Activated CD4-positive, alpha-beta memory T cell treated with anti-CD3 and anti-CD28 coated beads for 36 hours (primary cell): ENCODE measurements at regions of chr11 and their contacts with region 1.

Region 1: DNA sequence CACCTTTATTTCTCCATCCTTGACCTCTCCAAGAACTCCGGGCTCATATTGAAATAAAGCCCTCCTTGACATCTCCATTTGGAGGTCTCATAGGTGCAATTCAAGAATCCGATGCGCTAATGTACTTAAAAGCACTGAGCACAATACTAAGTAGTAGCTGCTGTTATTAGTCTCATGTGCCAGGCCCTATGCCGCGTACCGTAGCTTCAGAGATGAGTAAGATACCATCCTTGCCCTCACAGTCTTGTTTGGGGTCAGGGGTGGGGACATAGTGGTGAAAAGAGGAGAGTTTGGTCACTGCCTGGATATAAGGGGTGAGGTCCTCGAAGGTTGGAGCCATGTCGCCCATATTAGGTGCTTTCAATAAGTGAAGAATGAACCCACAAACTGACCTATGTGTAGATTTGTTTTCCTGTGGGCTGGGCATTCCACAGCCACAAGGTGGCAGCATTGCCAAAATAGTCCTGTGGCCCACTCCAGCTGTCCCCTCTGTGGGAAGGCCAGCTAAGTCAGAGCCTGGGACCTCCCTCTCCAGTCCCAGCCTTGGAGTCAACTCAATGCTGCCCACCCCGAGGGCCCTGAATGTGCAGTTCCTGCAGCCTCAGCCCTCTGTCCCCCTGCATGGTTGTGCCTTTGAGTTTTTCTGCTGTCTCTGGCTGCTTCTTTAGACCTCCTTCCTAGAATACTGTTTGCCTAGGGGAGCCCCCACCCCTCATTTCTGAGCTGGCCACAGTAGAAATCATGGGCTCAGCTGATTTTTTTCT is 6.5 kb downstream of the DCPS start:
- DNase-seq: peak; percentile 70
- H3K4me3 Mint-ChIP-seq: no peak overlapping the region
- H3K27ac Mint-ChIP-seq: no peak overlapping the region
- H3K4me1 Mint-ChIP-seq: peaks cover 22% of the 10 kb centered on the region
- H3K27me3 Mint-ChIP-seq: no peaks in the 10 kb centered on the region

Region 2: DNA sequence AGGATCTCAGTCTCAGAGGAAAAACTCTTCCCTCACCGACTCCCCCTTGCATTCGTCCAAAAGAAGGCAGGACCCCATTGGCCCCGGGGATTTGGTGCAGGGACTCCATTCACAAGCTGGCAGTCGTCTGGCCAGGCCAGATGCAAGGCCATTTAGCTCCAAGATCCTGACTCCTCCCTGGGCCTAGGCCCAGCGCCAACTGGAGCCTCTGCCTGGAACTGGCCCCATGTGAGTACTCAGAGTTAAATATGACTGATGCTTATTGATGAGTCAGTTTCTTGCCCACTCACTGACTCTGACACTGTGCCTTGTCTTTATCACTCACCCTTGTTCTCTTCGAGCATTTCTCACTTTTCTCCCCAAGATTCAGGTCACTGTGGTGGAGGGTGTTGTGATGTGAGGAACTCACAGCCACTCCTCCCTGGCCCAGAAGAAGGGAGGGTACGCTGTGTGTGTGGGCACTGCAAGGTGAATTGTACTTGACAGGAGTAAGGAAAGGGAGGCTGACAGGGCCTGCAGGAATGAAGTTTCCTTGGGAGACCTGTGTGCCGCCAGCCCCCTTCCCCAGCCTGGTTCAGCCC is 21.8 kb after region 1 on chr11:
- CTCF ChIA-PET with region 1: interaction called, 3 read pairs
- POLR2A ChIA-PET with region 1: no interaction called
- intact Hi-C with region 1: loop called (anchors 2 kb)
- DNase-seq: peak; percentile 56
- H3K4me3 Mint-ChIP-seq: no peak overlapping the region
- H3K27ac Mint-ChIP-seq: peak overlapping the region; percentile 40
- H3K4me1 Mint-ChIP-seq: peaks cover 21% of the 10 kb centered on the region
- H3K27me3 Mint-ChIP-seq: no peaks in the 10 kb centered on the region

Region 3: GRCh38 chr11:126391970-126392639 is 81.7 kb after region 1 on chr11:
- CTCF ChIA-PET with region 1: no interaction called
- POLR2A ChIA-PET with region 1: no interaction called
- intact Hi-C with region 1: no loop called
- DNase-seq: no peak
- H3K4me3 Mint-ChIP-seq: no peak overlapping the region
- H3K27ac Mint-ChIP-seq: no peak overlapping the region
- H3K4me1 Mint-ChIP-seq: no peaks in the 10 kb centered on the region
- H3K27me3 Mint-ChIP-seq: no peaks in the 10 kb centered on the region

Region 4: GRCh38 chr11:126416542-126417090 is 106.2 kb after region 1 on chr11:
- CTCF ChIA-PET with region 1: interaction called, 7 read pairs
- POLR2A ChIA-PET with region 1: no interaction called
- intact Hi-C with region 1: loop called (anchors 5 kb)
- DNase-seq: peak; percentile 84
- H3K4me3 Mint-ChIP-seq: peak overlapping the region; percentile 54
- H3K27ac Mint-ChIP-seq: no peak overlapping the region
- H3K4me1 Mint-ChIP-seq: peaks cover 10% of the 10 kb centered on the region
- H3K27me3 Mint-ChIP-seq: no peaks in the 10 kb centered on the region

Region 5: GRCh38 chr11:126440792-126441514 is 130.5 kb after region 1 on chr11:
- CTCF ChIA-PET with region 1: interaction called, 6 read pairs
- POLR2A ChIA-PET with region 1: interaction called, 4 read pairs
- intact Hi-C with region 1: loop called (anchors 1 kb)
- DNase-seq: peak; percentile 81
- H3K4me3 Mint-ChIP-seq: no peak overlapping the region
- H3K27ac Mint-ChIP-seq: no peak overlapping the region
- H3K4me1 Mint-ChIP-seq: no peaks in the 10 kb centered on the region
- H3K27me3 Mint-ChIP-seq: peaks cover 12% of the 10 kb centered on the region